Heart right ventricle (tissue), 16 donors: ENCODE measurements at regions of chr9 and their contacts with region 1.

Region 1: DNA sequence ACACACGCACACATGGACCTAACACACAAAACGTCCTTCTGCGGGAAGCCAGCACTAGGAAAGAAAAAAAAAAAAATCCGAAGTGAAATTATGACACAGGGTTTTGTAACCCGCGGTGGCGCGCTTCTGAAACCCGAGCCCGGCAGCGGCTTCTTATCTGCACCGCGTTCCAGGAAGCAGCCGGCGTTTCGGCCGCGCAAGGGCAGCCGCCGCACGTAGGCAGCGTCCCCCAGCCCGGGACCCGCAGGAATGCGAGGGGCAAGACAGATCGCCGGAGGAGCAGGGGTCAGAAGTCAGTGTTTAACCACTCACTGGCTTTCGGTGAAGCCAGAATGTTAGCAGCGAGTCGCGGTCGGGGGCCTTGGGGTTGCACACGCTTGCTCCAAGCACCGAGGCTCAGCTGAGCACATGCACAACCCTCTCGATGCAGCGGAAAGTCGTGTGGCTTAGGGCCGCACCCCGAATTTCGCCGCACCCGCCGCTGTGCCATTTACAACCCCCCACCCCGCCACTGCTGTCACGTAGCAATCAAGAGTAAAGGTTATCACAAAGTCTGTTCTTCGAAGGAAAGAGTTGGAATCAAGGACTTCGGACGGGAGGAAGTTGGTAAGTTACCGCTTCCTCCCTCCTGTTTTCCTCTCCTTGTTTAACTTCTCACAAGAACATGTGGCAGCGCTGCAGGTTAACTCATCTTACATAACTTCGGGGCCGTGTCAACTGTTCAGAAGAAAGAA is 167.9 kb downstream of the AUH start:
- DNase-seq: peak; percentile 83 to 85
- ATAC-seq: peak; percentile 57 to 84 (median 74)
- H3K4me3 ChIP-seq: peak overlapping the region in 9 of 10 donors; percentile 28 to 60 (median 53)
- H3K27ac ChIP-seq: peak overlapping the region; percentile 90 to 100 (median 98)
- H3K4me1 ChIP-seq: peaks cover 0 to 72% (median 48%) of the 10 kb centered on the region in 9 donors
- H3K27me3 ChIP-seq: no peaks in the 10 kb centered on the region
- CTCF ChIP-seq: peak in 1 of 9 donors; percentile 29

Region 2: DNA sequence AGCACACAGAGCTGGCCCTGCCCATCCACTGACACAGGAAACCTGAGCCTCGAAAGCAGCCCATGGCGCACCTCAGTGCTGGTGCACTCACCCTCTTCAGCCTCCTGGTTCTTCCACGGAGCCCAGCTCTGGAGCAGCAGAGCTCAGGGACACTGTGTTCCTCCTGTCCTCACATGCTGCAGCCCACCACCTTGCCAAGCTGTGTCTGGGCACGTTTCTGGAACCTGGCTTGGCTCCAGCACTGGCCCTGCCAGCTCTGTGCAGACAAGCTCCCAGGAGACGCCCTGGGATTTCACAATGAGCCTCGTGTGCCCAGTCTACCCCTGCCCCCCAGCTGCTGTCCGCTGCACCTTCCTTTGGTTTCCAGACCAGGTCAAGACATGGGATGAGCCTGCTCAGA is 272.7 kb before region 1 on chr9:
- intact Hi-C with region 1: loop called in 1 of 10 experiments (anchors 5 kb)
- DNase-seq: peak; percentile 77 to 84
- ATAC-seq: peak; percentile 88 to 97 (median 94)
- H3K4me3 ChIP-seq: no peak overlapping the region
- H3K27ac ChIP-seq: peak overlapping the region in 3 of 10 donors; percentile 40 to 65 (median 61)
- H3K4me1 ChIP-seq: peaks cover 0 to 17% (median 8%) of the 10 kb centered on the region in 9 donors
- H3K27me3 ChIP-seq: peaks cover 0 to 7% (median 0%) of the 10 kb centered on the region in 7 donors
- CTCF ChIP-seq: no peak

Region 3: DNA sequence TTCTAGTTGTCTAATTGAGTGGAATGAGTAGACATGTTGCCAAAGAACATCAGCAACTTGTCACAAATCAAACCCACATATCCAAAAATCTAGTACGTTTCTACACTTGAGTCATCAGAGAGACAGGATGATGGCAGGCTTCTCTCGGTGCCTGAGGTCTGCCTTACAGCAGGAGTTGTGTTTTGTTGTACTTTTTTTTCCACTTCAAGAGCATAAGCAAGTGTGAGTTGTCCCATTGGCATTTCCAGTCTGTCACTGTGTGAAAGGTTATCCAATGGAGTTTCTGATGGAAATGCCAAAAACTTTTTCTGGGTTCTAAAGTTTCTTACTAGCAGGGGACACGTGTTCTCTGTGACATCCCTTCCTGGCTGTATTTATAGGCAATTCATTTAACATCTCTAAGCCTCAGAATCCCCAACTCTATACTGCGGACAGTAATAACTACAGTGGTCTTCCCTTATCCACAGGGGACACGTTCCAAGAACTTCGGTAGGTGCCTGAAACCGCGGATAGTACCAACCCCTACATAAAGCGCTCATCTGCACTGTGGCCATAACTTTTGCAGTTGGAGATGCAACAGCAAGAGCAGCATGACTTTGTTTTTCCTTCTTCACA is 145.7 kb before region 1 on chr9:
- intact Hi-C with region 1: no loop called
- DNase-seq: no peak
- ATAC-seq: no peak
- H3K4me3 ChIP-seq: no peak overlapping the region
- H3K27ac ChIP-seq: no peak overlapping the region
- H3K4me1 ChIP-seq: peaks cover 0 to 8% (median 0%) of the 10 kb centered on the region in 9 donors
- H3K27me3 ChIP-seq: peaks cover 0 to 23% (median 5%) of the 10 kb centered on the region in 7 donors
- CTCF ChIP-seq: no peak

Region 4: DNA sequence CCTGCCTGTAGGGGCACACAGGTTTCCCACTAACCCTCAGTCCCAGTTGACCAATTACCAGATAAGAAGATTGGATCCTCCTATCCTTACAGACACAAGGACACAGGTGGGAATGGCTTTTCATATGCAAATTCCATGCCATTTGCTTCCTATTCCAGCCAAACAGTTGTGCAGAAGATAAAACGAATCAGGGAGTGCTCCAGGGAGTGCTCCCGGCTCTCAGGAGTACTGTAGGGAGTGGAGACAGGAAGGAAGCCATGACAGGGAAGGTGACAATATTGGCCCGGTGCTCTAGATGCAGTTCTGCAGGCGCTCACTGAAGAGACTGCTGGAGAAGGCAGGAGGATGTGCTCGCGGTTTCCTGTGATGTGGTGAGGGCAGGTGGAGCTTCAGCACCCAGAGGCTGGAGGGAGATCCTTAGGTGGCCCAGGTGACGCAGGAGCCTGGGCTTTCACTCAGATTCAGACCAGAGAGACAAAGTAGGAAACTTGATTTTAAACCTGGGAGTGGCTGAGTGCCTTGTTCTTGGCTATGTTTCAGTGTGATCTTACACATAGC is 92.1 kb before region 1 on chr9:
- intact Hi-C with region 1: loop called in 8 of 10 experiments (anchors 2 to 10 kb)
- DNase-seq: no peak
- ATAC-seq: peak in 1 of 8 donors; percentile 7
- H3K4me3 ChIP-seq: no peak overlapping the region
- H3K27ac ChIP-seq: peak overlapping the region; percentile 50 to 89 (median 83)
- H3K4me1 ChIP-seq: peaks cover 10 to 45% (median 36%) of the 10 kb centered on the region in 9 donors
- H3K27me3 ChIP-seq: no peaks in the 10 kb centered on the region
- CTCF ChIP-seq: no peak

Region 5: GRCh38 chr9:91117959-91118703 is 75.7 kb before region 1 on chr9:
- intact Hi-C with region 1: loop called in 3 of 10 experiments (anchors 5 to 10 kb)
- DNase-seq: peak; percentile 87
- ATAC-seq: peak; percentile 96 to 99 (median 98)
- H3K4me3 ChIP-seq: peak overlapping the region in 9 of 10 donors; percentile 22 to 49 (median 41)
- H3K27ac ChIP-seq: peak overlapping the region in 9 of 10 donors; percentile 47 to 86 (median 69)
- H3K4me1 ChIP-seq: peaks cover 11 to 45% (median 26%) of the 10 kb centered on the region in 9 donors
- H3K27me3 ChIP-seq: no peaks in the 10 kb centered on the region
- CTCF ChIP-seq: no peak

Region 6: DNA sequence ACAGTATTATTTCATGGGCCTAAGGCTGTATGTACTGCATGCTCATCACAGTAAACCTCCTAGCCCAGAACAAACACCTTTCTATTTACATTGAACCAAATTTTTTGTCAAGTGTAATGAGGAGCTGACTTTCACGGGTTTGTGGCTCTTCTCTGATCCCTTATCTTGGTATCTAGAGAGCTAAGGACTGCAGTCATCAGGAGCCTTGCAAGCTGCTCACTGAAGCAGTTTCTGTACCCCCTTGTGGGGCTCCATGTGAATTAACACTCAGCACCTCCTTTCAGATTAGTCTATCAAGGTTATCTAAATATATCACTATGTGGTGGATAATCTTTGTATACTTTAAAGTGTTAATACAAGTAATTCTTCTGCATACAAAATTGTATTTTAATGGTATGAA is 59.7 kb after region 1 on chr9:
- intact Hi-C with region 1: loop called in 1 of 10 experiments (anchors 10 kb)
- DNase-seq: no peak
- ATAC-seq: peak in 2 of 8 donors; percentile 23 to 34
- H3K4me3 ChIP-seq: no peak overlapping the region
- H3K27ac ChIP-seq: no peak overlapping the region
- H3K4me1 ChIP-seq: peaks cover 0 to 36% (median 15%) of the 10 kb centered on the region in 9 donors
- H3K27me3 ChIP-seq: no peaks in the 10 kb centered on the region
- CTCF ChIP-seq: peak in 3 of 9 donors; percentile 6 to 25 (median 7)

Region 7: DNA sequence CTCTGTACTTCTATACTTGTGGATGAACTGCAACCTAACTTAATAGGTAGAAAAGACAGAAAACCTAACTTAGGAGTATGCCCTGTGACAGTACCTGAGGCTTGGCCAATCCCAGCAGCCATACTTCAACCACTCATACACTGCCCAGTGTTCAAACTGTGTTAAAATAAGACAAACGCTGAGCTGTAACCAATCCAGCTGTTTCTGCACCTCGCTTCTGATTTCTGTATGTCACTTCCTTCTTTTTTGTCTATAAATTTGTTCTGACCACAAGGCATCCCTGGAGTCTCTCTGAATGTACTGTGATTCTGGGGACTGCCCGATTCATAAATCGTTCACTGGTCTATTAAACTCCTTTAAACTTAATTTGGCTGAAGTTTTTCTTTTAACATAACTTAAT is 126.5 kb after region 1 on chr9:
- intact Hi-C with region 1: no loop called
- DNase-seq: no peak
- ATAC-seq: no peak
- H3K4me3 ChIP-seq: no peak overlapping the region
- H3K27ac ChIP-seq: no peak overlapping the region
- H3K4me1 ChIP-seq: peaks cover 0 to 4% (median 0%) of the 10 kb centered on the region in 9 donors
- H3K27me3 ChIP-seq: no peaks in the 10 kb centered on the region
- CTCF ChIP-seq: no peak

Region 8: DNA sequence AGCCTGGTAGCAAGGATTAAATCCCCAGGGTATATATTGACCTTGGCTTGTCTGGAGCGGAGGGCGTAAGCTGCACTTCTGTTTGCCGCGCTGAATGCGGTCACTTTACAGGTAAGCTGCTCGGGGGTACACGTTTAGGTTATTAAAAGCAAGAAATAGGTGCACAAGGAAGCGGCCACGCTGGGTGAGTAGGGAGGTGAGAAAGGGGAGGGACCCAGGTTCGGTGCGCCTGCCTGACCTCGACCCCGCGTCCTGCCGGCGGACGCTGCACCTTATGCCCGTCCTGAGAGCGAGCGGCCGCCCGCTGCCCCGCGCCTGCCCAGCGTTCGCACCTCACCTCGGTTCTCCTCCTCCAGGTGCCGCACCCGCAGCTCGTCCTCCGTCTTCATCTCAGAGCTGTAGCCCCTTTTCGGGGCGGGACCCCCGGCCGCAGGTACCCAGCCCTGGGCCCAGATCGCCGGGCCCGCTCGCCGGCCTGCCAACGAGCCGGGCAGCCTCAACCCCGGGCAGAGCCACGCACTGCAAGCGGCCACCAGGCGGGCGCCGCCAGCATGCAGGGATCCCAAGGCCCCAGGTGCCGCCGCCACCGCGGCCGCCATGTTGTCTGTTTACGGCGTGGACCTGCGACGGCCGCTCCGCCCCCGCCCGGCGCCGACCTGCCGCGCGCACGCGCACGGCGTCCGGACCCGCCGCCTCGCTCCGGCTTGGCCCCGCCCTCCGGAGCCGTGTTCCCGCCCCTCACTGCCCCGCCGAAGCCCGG is 167.6 kb after region 1 on chr9 and contains the start of gene AUH:
- intact Hi-C with region 1: loop called in 3 of 10 experiments (anchors 5 kb)
- DNase-seq: peak; percentile 79 to 90
- ATAC-seq: peak; percentile 96 to 100 (median 98)
- H3K4me3 ChIP-seq: peak within 1 kb of the TSS; percentile 92 to 100 (median 98)
- H3K27ac ChIP-seq: peak within 1 kb of the TSS; percentile 85 to 97 (median 92)
- H3K4me1 ChIP-seq: peaks cover 0 to 43% (median 34%) of the 10 kb centered on the region in 9 donors
- H3K27me3 ChIP-seq: no peaks in the 10 kb centered on the region
- CTCF ChIP-seq: peak in 3 of 9 donors; percentile 7 to 17 (median 12)
- total RNA-seq, gene AUH: 30.6 to 51.3 (median 44.2) TPM